ENCODE measurements at regions of chr2 and their contacts with region 1.

Region 1: GRCh38 chr2:177148477-177149154 is 64.0 kb upstream of the HNRNPA3 start:
- DNase-seq: peak; percentile 84
- H3K4me3 Mint-ChIP-seq: peak overlapping the region; percentile 70
- H3K27ac Mint-ChIP-seq: no peak overlapping the region
- H3K4me1 Mint-ChIP-seq: peaks cover 15% of the 10 kb centered on the region
- H3K27me3 Mint-ChIP-seq: peaks cover 66% of the 10 kb centered on the region
- CTCF ChIP-seq: peak; percentile 70

Region 2: GRCh38 chr2:176126929-176127773 is 1021.5 kb before region 1 on chr2:
- CTCF ChIA-PET with region 1: interaction called, 40 read pairs
- POLR2A ChIA-PET with region 1: interaction called, 7 read pairs
- intact Hi-C with region 1: loop called (anchors 2 kb)
- DNase-seq: peak; percentile 63
- H3K4me3 Mint-ChIP-seq: no peak overlapping the region
- H3K27ac Mint-ChIP-seq: no peak overlapping the region
- H3K4me1 Mint-ChIP-seq: no peaks in the 10 kb centered on the region
- H3K27me3 Mint-ChIP-seq: peaks cover 11% of the 10 kb centered on the region
- CTCF ChIP-seq: peak; percentile 76

Region 3: DNA sequence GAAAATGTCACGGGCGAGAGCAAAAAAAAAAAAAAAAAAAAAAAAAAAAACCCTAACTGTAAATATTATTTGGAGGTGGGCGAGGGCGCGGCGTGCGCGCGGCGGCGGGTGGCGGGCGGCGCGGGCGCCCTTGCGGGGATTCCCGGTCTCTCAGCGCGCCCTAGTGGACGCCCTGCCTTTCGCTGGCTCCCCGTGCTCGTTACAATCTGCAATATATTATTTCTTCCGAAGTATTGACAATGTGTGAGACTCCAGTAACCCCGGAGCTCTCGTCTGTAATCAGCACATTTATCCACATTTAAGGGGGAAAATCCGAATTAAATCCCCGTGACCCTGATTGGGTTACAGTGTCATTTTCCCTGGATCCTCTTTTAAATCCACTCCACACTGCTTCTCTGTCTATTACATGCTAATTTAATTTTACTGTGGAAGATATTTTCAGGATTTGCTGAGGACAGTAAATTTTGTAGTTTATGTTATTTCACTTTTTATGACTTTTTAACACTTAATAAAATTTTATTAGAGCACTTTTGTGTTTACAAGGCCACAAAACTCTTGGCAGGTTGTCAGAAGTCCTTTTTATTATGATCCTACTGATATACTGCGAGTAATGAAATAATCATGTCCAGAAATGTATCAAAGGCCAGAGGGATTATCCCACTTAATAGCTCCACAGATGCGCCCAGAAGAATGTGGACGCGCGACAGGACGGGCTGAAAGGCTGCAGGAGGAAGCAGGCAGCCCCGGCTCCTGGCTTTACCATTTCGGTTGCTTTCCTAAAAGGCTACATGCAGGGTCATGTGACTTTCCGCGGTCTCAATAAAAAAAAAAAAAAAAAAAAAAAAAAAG is 510.2 kb before region 1 on chr2:
- CTCF ChIA-PET with region 1: interaction called, 9 read pairs
- POLR2A ChIA-PET with region 1: no interaction called
- intact Hi-C with region 1: loop called (anchors 1 kb)
- DNase-seq: peak; percentile 61
- H3K4me3 Mint-ChIP-seq: peak overlapping the region; percentile 74
- H3K27ac Mint-ChIP-seq: no peak overlapping the region
- H3K4me1 Mint-ChIP-seq: peaks cover 6% of the 10 kb centered on the region
- H3K27me3 Mint-ChIP-seq: no peaks in the 10 kb centered on the region
- CTCF ChIP-seq: peak; percentile 85

Region 4: GRCh38 chr2:176664478-176664877 is 484.1 kb before region 1 on chr2:
- CTCF ChIA-PET with region 1: interaction called, 14 read pairs
- POLR2A ChIA-PET with region 1: no interaction called
- intact Hi-C with region 1: no loop called
- DNase-seq: no peak
- H3K4me3 Mint-ChIP-seq: no peak overlapping the region
- H3K27ac Mint-ChIP-seq: no peak overlapping the region
- H3K4me1 Mint-ChIP-seq: peaks cover 5% of the 10 kb centered on the region
- H3K27me3 Mint-ChIP-seq: no peaks in the 10 kb centered on the region
- CTCF ChIP-seq: no peak

Region 5: GRCh38 chr2:176821345-176821744 is 327.3 kb before region 1 on chr2:
- CTCF ChIA-PET with region 1: interaction called, 33 read pairs
- POLR2A ChIA-PET with region 1: no interaction called
- intact Hi-C with region 1: no loop called
- DNase-seq: no peak
- H3K4me3 Mint-ChIP-seq: no peak overlapping the region
- H3K27ac Mint-ChIP-seq: no peak overlapping the region
- H3K4me1 Mint-ChIP-seq: no peaks in the 10 kb centered on the region
- H3K27me3 Mint-ChIP-seq: peaks cover 53% of the 10 kb centered on the region
- CTCF ChIP-seq: peak; percentile 13

Region 6: GRCh38 chr2:176854878-176855277 is 293.7 kb before region 1 on chr2:
- CTCF ChIA-PET with region 1: interaction called, 12 read pairs
- POLR2A ChIA-PET with region 1: interaction called, 3 read pairs
- intact Hi-C with region 1: no loop called
- DNase-seq: no peak
- H3K4me3 Mint-ChIP-seq: no peak overlapping the region
- H3K27ac Mint-ChIP-seq: no peak overlapping the region
- H3K4me1 Mint-ChIP-seq: no peaks in the 10 kb centered on the region
- H3K27me3 Mint-ChIP-seq: peaks cover 55% of the 10 kb centered on the region
- CTCF ChIP-seq: no peak

Region 7: GRCh38 chr2:177724398-177725287 is 576.0 kb after region 1 on chr2:
- CTCF ChIA-PET with region 1: no interaction called
- POLR2A ChIA-PET with region 1: no interaction called
- intact Hi-C with region 1: loop called (anchors 5 kb)
- DNase-seq: peak; percentile 58
- H3K4me3 Mint-ChIP-seq: no peak overlapping the region
- H3K27ac Mint-ChIP-seq: no peak overlapping the region
- H3K4me1 Mint-ChIP-seq: no peaks in the 10 kb centered on the region
- H3K27me3 Mint-ChIP-seq: peaks cover 53% of the 10 kb centered on the region
- CTCF ChIP-seq: peak; percentile 86